Body of pancreas (tissue), 4 donors: ENCODE measurements at regions of chr7 and their contacts with region 1.

Region 1: GRCh38 chr7:86939197-86939814 is 120.1 kb downstream of the ELAPOR2 start:
- DNase-seq: peak; percentile 50 to 76 (median 54)
- ATAC-seq: peak; percentile 67
- H3K4me3 ChIP-seq: no peak overlapping the region
- H3K27ac ChIP-seq: no peak overlapping the region
- H3K4me1 ChIP-seq: no peaks in the 10 kb centered on the region
- H3K27me3 ChIP-seq: no peaks in the 10 kb centered on the region
- CTCF ChIP-seq: peak; percentile 16 to 80 (median 74)
- POLR2A ChIP-seq: no peak

Region 2: DNA sequence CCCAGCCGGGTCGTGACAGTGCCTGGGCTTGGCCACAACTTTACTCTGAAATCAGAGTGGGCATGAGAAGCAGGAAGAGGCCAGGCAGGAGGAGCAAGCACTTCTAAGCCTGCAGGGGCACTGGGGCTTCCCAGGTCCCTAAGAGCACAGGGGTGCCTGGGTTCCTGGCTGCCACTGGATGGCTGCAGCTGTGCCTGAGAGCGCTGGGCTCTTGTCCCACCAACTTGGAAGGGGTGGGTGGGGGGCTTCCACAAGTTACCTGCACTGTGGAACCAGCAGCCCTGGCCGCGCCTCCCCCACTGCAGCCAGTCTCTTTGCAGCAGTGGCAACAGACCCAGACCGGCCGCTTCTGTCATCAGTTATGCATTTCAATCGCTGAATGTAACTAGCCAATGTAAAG is 730.3 kb before region 1 on chr7:
- intact Hi-C with region 1: no loop called
- DNase-seq: no peak
- ATAC-seq: no peak
- H3K4me3 ChIP-seq: no peak overlapping the region
- H3K27ac ChIP-seq: no peak overlapping the region
- H3K4me1 ChIP-seq: no peaks in the 10 kb centered on the region
- H3K27me3 ChIP-seq: no peaks in the 10 kb centered on the region
- CTCF ChIP-seq: no peak
- POLR2A ChIP-seq: no peak

Region 3: DNA sequence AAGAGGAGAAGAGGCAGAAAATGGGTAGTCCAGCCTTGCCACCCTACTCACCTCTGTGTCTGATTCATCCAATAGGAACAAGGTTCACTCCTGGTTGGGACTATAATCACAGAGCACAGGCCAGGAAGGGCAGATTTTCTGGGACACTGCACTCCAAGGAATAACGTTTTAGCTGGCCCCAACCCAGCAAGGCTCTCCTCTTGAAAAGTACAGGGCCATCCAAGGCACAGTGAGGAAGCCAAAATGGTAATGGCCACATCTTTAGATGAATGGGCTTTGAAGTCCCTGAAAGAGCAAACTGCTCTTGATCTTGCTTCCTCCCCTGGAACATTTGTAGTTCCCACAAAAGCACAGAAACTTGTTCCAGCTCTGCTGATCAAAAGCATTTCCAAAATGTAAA is 146.2 kb before region 1 on chr7:
- intact Hi-C with region 1: no loop called
- DNase-seq: no peak
- ATAC-seq: no peak
- H3K4me3 ChIP-seq: no peak overlapping the region
- H3K27ac ChIP-seq: no peak overlapping the region
- H3K4me1 ChIP-seq: no peaks in the 10 kb centered on the region
- H3K27me3 ChIP-seq: no peaks in the 10 kb centered on the region
- CTCF ChIP-seq: no peak
- POLR2A ChIP-seq: no peak

Region 4: DNA sequence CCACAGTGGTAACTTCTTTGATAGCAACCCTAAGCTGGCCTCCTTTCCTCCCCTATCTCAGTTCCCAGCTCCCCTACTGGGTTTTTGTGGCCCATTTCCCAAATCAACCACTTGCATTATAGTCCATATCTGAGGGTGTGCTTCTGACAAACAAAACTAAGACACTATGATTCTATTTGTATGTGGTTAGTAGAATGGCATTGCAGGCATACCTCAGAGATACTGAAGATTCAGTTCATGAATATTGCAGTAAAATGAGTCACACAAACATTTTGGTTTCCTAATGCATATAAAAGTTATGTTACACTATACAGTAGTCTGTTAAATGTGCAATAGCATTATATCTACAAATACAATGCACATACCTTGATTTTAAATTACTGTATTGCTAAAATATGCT is 295.6 kb after region 1 on chr7:
- intact Hi-C with region 1: loop called (anchors 5 kb)
- DNase-seq: no peak
- ATAC-seq: no peak
- H3K4me3 ChIP-seq: no peak overlapping the region
- H3K27ac ChIP-seq: no peak overlapping the region
- H3K4me1 ChIP-seq: peaks cover 13% of the 10 kb centered on the region
- H3K27me3 ChIP-seq: no peaks in the 10 kb centered on the region
- CTCF ChIP-seq: no peak
- POLR2A ChIP-seq: no peak